ENCODE measurements at regions of chrX and their contacts with region 1.

Region 1: GRCh38 chrX:37349221-37350064 is at the start of gene PRRG1:
- DNase-seq: peak; percentile 69 to 83
- H3K4me3 ChIP-seq: peak within 1 kb of the TSS; percentile 79
- H3K27ac ChIP-seq: peak within 1 kb of the TSS; percentile 59
- H3K4me1 ChIP-seq: peaks cover 33% of the 10 kb centered on the region
- H3K27me3 ChIP-seq: no peaks in the 10 kb centered on the region
- CTCF ChIP-seq: no peak
- total RNA-seq, gene PRRG1: 23.5 and 34.4 TPM in 2 replicates

Region 2: DNA sequence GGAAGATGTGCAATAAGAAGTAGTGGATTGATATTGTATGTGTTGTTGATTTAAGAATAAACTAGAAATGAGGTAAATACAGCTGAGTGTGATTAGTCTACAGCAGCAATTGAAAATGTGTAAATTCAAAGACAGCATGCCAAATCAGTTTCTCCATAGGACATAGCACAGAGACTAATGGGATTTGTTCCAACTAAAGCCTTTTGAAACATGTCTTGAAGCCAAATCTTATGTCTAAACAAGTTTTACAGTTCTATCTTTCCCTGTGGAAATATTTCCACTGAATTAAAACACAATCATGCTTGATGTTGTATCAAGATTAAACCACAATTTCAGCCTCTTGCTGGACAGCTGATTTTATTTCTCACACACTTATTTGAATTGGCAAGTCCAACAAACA is 838.7 kb before region 1 on chrX:
- CTCF ChIA-PET with region 1: no interaction called
- POLR2A ChIA-PET with region 1: no interaction called
- intact Hi-C with region 1: no loop called
- DNase-seq: no peak
- H3K4me3 ChIP-seq: no peak overlapping the region
- H3K27ac ChIP-seq: no peak overlapping the region
- H3K4me1 ChIP-seq: no peaks in the 10 kb centered on the region
- H3K27me3 ChIP-seq: no peaks in the 10 kb centered on the region
- CTCF ChIP-seq: no peak

Region 3: GRCh38 chrX:37396745-37397144 is 47.3 kb after region 1 on chrX:
- CTCF ChIA-PET with region 1: no interaction called
- POLR2A ChIA-PET with region 1: no interaction called
- intact Hi-C with region 1: no loop called
- DNase-seq: no peak
- H3K4me3 ChIP-seq: no peak overlapping the region
- H3K27ac ChIP-seq: no peak overlapping the region
- H3K4me1 ChIP-seq: no peaks in the 10 kb centered on the region
- H3K27me3 ChIP-seq: no peaks in the 10 kb centered on the region
- CTCF ChIP-seq: no peak

Region 4: DNA sequence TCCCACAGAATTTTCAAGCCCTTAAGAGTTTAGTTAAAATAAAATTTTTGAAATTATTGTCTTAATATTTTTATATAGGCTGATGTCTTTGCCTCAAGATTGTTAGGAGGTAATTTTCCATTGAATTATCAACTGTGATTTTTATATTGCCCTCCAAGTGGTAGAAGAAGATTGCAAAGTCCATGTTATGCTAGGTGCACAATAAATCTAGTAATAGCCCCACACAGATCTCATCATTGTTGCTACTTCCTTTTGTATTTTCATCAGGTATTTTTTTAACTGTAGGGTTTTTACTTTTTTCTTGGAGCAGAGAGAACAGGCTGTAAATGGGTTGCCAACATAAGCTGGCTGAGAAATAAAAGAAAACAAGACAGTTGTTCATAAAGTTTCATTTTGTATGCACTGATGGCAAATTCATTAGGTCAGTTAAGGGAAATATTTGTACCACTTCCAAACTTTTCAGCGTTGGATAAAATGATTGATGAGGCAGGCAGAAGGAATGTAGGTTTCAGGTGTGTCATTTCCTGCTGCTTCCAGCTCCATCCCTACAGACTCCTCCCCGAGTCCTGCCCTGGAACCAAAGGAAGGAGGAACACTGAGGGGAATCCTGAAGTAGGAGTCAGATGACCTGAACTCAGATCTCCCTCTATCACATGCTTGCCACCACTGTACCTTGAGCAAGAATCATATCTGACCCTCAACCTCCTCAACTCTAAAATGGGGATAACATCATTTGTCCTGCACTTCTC is 105.3 kb after region 1 on chrX:
- CTCF ChIA-PET with region 1: no interaction called
- POLR2A ChIA-PET with region 1: no interaction called
- intact Hi-C with region 1: loop called (anchors 2 kb)
- DNase-seq: peak; percentile 57 to 74
- H3K4me3 ChIP-seq: no peak overlapping the region
- H3K27ac ChIP-seq: peak overlapping the region; percentile 52
- H3K4me1 ChIP-seq: peaks cover 24% of the 10 kb centered on the region
- H3K27me3 ChIP-seq: no peaks in the 10 kb centered on the region
- CTCF ChIP-seq: no peak

Region 5: DNA sequence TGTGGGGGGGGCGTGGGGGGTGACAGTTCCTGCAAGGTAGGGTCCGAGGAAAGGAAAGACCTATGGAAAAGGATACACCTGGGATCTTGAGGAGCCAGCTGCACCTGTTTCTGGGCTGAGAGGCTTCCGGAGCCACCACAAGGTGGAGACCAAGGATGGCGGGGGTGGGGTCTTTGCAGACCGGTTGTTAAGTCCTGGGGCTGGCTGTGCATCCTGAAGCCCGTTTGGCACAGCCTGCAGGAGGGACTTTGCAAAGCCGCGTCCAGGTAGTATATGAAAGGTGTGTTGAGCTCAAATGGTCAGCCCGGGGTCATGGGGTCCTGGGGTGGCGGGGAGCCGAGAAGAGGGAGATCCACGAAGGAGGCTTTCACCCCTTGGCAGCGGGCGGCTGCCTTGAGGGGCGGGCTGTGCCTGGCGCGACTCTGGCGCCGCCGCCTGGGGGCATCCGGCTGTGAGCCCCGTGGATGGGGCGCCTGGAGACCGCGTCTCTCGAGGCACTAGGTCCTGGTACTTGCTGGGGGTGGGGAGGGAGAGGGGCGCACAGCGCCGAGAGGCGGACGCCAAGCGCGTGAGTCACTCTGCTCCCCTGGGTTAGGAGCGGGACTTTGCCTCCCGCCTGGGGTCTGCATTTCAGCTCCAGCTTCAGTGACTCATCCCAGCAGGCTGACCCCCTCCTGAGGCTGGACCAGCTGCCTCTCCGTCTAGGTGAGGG is 556.1 kb after region 1 on chrX:
- CTCF ChIA-PET with region 1: no interaction called
- POLR2A ChIA-PET with region 1: no interaction called
- intact Hi-C with region 1: no loop called
- DNase-seq: no peak
- H3K4me3 ChIP-seq: no peak overlapping the region
- H3K27ac ChIP-seq: no peak overlapping the region
- H3K4me1 ChIP-seq: no peaks in the 10 kb centered on the region
- H3K27me3 ChIP-seq: no peaks in the 10 kb centered on the region
- CTCF ChIP-seq: no peak